ENCODE measurements at regions of chr1 and their contacts with region 1.

Region 1: DNA sequence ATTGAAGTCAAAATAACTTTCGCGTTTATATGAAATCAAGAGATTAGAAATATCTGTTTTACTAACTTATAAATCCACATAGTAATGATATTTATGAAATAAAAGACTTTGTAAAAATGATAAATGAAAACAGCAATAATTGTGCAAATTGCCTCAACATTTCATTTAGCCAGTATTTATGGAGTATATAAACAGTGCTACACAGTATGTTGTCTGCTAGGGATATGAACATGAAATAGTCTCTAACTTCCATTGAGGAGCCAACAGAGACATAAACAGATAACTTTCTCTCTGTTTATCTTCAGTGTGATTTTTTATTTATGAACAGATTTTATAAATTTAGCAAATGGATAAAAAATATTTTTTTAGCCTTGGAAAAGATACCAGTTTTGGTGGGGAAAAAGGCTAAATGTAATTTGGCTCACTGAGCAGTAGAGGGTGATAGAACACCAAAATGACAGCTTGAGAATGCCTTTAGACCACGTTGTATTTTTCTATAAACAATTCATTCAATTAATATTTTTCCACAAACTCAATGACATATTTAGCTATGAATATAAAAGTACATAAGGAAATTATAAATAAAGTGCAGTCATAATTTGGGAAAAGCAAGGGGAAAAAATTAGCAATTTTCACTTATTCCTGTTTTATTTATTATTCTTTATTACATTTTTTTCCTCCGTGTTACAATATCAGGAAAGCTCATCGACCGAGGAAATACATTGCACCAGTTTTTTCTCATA is 47.5 kb upstream of the EEIG2 start:
- DNase-seq: no peak
- ATAC-seq: peak in 3 of 8 donors; percentile 61 to 73 (median 72)
- H3K4me3 ChIP-seq: no peak overlapping the region
- H3K27ac ChIP-seq: no peak overlapping the region
- H3K4me1 ChIP-seq: no peaks in the 10 kb centered on the region
- H3K27me3 ChIP-seq: no peaks in the 10 kb centered on the region
- CTCF ChIP-seq: peak; percentile 73 to 95 (median 91)

Region 2: DNA sequence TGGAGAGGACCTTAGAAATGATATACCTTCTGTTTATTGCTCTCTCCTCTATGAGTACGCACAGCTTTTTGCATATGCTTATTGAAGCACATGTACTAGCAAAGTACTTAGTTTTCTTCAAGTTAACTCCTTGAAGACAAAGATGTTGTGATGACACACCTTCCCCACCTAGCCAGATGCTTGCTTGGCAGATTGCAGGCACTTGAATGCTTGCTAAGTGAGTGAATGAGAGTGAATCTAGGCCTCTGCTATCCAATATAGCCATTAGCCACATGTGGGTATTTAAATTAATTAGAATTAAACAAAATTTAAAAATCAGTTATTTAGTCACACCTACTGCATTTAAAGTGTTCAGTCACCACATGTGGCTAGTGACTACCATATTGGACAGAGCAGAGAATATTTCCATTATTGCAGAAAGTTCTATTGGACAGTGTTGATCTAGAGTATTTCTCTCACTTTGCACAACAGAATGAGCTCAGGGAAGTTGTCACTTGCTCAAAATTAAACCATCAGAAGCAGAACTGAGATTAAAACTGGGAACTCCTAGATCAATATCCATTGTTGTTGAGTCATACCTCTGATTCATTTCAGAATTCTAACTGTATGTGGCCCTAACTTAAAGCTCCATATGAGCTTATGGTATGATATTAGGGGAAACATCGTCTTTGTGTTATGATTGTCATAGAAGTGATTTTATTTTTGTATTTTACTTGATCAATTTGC is 38.9 kb after region 1 on chr1:
- intact Hi-C with region 1: loop called in 3 of 10 experiments (anchors 5 kb)
- DNase-seq: no peak
- ATAC-seq: peak in 1 of 8 donors; percentile 22
- H3K4me3 ChIP-seq: no peak overlapping the region
- H3K27ac ChIP-seq: peak overlapping the region in 1 of 10 donors; percentile 81
- H3K4me1 ChIP-seq: peaks cover 0 to 20% (median 0%) of the 10 kb centered on the region in 9 donors
- H3K27me3 ChIP-seq: no peaks in the 10 kb centered on the region
- CTCF ChIP-seq: no peak

Region 3: DNA sequence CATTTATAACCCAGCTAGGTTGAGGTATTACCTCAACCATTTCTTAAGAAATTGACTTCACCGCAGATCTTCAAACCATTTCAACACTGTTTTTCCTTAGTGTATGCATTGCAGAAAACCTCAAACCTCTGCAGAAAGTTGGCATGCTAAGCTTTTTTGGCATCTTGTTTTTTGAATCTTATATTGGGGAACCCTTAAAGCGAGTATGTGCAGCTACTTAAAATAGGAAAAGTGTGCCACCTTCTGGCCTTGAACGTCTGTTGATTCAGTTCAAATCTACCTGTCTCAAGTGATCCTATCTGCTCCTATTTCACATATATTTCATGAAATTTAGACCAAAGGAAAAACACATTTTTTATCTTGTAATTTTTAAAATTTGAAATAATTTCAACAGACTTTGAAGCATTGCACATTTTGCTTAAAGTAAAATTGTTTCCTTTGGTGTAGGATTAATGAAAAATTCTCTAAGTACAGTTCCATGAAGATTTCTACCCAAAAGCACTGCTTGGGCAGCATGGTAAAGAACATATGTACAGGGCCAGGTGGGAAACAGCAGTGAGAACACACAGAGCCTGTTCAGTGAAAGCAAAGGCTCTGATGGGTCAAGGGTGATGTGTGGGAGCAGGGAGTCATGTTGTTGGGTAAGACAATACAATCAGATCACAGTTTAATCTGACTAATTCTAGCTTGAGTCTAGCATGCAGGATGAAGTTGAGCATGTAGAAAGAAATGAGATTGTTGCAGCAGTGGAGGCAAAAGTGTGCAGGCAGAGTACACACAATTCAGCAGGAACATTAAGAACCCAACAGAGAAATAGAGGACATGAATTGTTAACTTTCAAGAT is 131.3 kb after region 1 on chr1:
- intact Hi-C with region 1: loop called (anchors 1 to 5 kb)
- DNase-seq: peak in 1 of 2 donors; percentile 56
- ATAC-seq: peak in 7 of 8 donors; percentile 50 to 80 (median 68)
- H3K4me3 ChIP-seq: no peak overlapping the region
- H3K27ac ChIP-seq: peak overlapping the region in 1 of 10 donors; percentile 90
- H3K4me1 ChIP-seq: peaks cover 0 to 41% (median 0%) of the 10 kb centered on the region in 9 donors
- H3K27me3 ChIP-seq: no peaks in the 10 kb centered on the region
- CTCF ChIP-seq: peak; percentile 30 to 83 (median 70)

Region 4: DNA sequence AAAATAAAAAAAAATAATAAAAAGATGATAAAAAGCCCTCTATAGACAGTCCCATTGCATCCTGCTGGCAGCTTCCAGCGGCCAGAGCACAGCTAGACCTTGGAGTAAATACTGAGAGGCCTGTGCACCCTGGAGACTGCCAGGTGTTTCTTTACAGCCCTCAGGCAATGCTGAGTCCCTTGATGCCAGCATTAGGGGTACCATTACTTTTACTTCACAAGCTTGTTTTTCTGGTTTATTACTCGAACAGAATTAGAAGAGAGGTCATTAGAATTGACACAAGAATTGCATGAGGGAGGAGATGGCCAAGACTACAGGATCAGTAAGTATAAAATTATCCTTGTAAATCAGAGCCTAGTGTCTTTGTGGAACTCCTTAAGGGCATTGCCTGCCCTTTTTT is 300.9 kb after region 1 on chr1:
- intact Hi-C with region 1: no loop called
- DNase-seq: no peak
- ATAC-seq: no peak
- H3K4me3 ChIP-seq: no peak overlapping the region
- H3K27ac ChIP-seq: no peak overlapping the region
- H3K4me1 ChIP-seq: peaks cover 0 to 30% (median 14%) of the 10 kb centered on the region in 9 donors
- H3K27me3 ChIP-seq: no peaks in the 10 kb centered on the region
- CTCF ChIP-seq: no peak

Region 5: DNA sequence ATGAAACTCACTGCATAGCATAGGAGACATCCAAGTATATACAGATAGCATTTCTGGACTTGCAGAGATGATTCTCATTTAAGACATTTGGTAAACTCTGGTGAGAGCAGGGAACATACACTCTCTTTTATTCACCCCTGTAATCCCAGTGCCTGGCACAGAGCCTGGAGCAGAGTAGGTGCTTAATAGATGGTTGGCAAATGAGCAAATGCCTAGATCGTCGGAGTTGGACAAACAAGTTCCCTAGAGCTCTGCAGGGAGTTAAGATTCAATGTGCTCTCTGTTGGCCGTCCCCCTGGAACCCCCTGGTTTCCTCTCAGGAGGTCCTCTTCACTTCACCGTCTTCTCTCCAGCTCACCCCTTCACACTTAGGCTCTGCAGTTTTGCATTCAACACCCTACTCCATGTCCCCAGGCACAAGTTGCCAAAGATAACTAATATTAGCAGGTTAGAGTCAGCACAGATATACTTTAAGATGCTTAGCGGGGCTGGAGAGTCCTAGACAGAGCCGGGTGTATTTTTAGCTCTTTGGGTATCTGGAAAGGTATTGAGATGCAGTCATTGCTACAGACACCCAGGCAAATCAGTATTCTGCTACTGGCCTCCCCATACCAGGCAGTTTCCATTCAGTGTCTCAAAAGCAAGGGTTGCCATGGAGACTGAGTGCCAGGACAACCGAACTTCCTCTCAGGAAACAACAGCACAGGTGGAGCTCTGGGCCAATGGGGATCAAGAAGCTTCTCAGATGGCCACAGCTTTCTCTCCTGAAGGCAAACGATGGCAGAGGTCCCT is 1742.8 kb after region 1 on chr1:
- intact Hi-C with region 1: no loop called
- DNase-seq: no peak
- ATAC-seq: peak; percentile 42 to 94 (median 72)
- H3K4me3 ChIP-seq: no peak overlapping the region
- H3K27ac ChIP-seq: peak overlapping the region in 3 of 10 donors; percentile 39 to 60 (median 39)
- H3K4me1 ChIP-seq: peaks cover 0 to 28% (median 17%) of the 10 kb centered on the region in 9 donors
- H3K27me3 ChIP-seq: no peaks in the 10 kb centered on the region
- CTCF ChIP-seq: no peak

Measured in heart right ventricle (tissue), 16 donors.